ENCODE measurements at regions of chr9 and their contacts with region 1.

Region 1: GRCh38 chr9:73132034-73132776 is 19.5 kb upstream of the ANXA1 start:
- DNase-seq: peak; percentile 81
- ATAC-seq: peak; percentile 90
- H3K4me3 Mint-ChIP-seq: peak overlapping the region; percentile 72
- H3K27ac Mint-ChIP-seq: peak overlapping the region; percentile 86
- H3K4me1 Mint-ChIP-seq: peaks cover 37% of the 10 kb centered on the region
- H3K27me3 Mint-ChIP-seq: no peaks in the 10 kb centered on the region

Region 2: DNA sequence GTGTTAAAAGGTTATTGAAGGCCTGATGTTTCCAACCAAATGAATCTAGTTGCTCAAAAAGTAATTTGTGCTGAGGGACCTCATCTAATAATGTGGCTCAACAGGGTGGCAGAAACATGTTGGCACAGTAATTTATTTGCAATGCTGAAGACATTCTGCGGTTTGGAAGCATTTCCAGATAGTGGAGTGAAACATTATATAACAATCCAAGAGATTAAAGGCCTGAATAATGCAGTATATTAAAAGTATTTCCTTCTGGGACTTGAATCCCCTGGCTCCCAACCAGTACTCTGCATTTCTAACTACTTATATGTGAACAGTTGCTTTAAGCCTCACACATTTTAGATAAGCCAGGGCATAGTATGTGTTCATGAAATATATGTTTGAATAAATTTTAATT is 153.5 kb before region 1 on chr9:
- CTCF ChIA-PET with region 1: no interaction called
- POLR2A ChIA-PET with region 1: no interaction called
- intact Hi-C with region 1: no loop called
- DNase-seq: no peak
- ATAC-seq: no peak
- H3K4me3 Mint-ChIP-seq: no peak overlapping the region
- H3K27ac Mint-ChIP-seq: no peak overlapping the region
- H3K4me1 Mint-ChIP-seq: no peaks in the 10 kb centered on the region
- H3K27me3 Mint-ChIP-seq: peaks cover 3% of the 10 kb centered on the region

Region 3: DNA sequence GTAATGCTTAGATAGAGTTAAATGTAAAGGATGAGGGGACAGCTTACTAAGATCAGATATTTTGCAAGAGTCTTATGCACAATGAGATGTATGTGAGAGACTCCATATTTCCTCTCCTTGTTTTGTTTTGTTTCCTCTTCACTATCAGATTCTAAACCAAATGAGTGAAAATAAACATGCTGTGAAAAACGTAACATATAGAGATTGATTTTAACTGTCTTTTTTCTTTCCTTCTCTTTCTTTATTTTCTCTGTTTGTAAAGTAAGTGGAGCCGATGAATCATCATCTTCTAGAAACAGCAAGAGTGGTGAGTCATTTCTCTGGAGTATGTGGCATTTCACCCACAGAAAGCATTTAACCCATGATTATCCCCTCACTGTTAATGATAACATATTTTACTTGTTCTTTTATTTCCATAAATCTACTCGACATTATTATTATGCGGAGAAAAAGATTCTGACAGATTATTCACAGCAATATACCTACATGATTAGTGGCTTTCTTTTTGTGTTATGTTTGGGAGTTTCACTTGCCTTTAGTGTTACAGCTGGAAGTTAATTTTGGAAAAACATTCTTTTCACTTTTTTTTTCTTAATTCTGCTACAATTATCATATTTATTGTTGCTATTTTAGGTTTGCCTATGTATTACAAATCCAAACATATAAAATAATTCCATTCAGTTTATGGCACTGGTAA is 17.3 kb after region 1 on chr9:
- CTCF ChIA-PET with region 1: interaction called, 12 read pairs
- POLR2A ChIA-PET with region 1: no interaction called
- intact Hi-C with region 1: loop called (anchors 1 kb)
- DNase-seq: no peak
- ATAC-seq: peak; percentile 65
- H3K4me3 Mint-ChIP-seq: peak overlapping the region; percentile 64
- H3K27ac Mint-ChIP-seq: peak overlapping the region; percentile 81
- H3K4me1 Mint-ChIP-seq: peaks cover 61% of the 10 kb centered on the region
- H3K27me3 Mint-ChIP-seq: no peaks in the 10 kb centered on the region

Region 4: DNA sequence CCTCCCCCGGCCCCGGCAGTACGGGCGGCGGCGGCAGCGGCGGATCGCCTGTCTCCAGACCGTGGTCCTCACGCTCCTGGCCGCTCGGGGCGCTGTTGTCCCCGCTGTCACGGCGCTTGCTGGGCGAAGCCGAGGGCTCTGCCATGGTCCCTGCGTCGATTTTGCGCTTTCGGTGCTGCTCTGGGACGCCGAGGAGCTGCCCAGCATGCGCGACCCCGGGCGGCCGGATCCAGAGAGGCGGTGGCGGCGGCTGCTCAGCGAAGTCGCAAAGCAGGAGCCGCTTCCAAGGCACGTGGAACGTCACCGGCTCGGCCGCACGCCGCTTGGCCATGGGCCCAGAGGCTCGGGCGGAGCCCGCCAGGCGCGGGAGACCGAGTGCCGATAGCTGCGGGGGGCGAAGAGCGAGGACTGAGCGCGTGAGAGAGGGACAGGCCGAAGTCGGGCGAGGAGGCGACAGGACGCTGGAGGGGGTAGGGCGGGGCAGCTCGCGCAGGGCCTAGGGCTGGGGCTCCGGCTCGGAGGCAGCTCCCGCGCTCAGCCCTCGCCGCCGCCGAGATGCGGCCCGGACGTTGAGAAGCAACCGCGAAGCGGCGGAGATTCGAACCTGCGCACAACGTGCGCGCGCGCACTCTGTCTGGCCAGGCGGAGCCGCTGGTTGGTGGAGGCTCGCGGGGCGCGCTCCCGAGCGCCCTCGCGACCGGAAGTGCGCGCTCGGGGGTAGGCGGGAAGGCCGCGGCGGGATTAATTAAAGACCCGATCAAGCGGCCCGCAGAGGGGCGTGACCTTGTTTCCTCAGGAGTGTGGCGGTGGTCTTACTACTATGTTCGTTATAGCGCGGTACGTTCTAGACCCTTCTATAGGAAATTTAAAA is 1820.3 kb after region 1 on chr9 and contains the start of gene C9orf40:
- CTCF ChIA-PET with region 1: no interaction called
- POLR2A ChIA-PET with region 1: no interaction called
- intact Hi-C with region 1: loop called in 1 of 2 experiments (anchors 10 kb)
- DNase-seq: peak; percentile 95
- ATAC-seq: peak; percentile 93
- H3K4me3 Mint-ChIP-seq: peak within 1 kb of the TSS; percentile 93
- H3K27ac Mint-ChIP-seq: peak within 1 kb of the TSS; percentile 96
- H3K4me1 Mint-ChIP-seq: peaks cover 28% of the 10 kb centered on the region
- H3K27me3 Mint-ChIP-seq: no peaks in the 10 kb centered on the region
- total RNA-seq, gene C9orf40: 14.0 to 19.7 TPM

Measured in activated CD4-positive, alpha-beta T cell treated with anti-CD3 and anti-CD28 coated beads for 36 hours (primary cell).